CD8-positive, alpha-beta T cell (primary cell): ENCODE measurements at regions of chr20 and their contacts with region 1.

Region 1: DNA sequence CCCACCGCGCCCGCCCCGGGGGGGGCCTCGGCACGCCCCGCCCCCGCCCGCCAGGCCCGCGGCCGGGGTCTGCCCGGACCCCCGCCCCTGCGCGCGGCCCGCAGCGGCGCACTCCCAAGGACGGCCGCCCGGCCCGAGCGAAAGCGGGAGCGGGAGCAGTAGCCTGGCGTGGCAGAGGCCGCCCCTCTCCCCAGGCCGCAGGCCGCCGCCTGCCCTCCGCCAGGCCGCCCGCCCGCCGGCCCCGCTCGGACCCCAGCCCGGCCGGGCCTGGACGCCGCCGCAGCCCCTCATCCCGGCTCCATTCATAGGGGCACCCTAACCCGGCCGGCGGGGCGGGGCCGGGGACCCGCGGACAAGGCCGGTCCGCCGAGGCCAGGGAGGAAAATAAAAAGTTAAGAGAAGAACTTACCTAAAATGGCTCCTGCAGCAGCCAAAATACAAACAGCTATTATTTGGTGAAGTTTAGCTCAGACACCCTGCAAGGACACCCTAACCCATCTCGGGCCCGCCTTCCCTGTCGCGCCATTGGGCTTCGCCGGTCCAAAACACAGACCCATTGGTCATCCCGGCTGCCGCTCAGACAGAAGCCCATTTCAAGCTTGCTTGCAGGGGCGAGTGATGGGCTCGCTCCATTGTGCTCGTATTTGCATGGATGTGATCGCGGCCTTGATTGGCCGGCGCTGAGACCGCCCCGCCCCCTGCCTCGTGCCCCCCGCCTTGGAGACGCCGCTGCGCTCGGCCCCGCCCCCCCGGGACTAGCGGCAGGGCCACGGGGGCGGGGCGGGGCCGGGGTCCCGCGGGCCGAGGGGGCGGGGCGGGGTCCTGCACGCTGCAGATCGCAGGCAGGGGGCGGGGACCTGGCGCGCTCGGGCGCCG is at the start of gene CHD6:
- DNase-seq: peak; percentile 97 to 100 (median 99)
- ATAC-seq: peak; percentile 92
- H3K4me3 ChIP-seq: peak within 1 kb of the TSS; percentile 65 to 67
- H3K4me3 Mint-ChIP-seq: peak within 1 kb of the TSS; percentile 92
- H3K27ac ChIP-seq: peak within 1 kb of the TSS; percentile 60 to 68
- H3K27ac Mint-ChIP-seq: peak within 1 kb of the TSS; percentile 91
- H3K4me1 ChIP-seq: peaks cover 23% of the 10 kb centered on the region
- H3K4me1 Mint-ChIP-seq: peaks cover 47% of the 10 kb centered on the region
- H3K27me3 ChIP-seq: no peaks in the 10 kb centered on the region
- H3K27me3 Mint-ChIP-seq: no peaks in the 10 kb centered on the region
- CTCF ChIP-seq: no peak
- total RNA-seq, gene CHD6: 113 to 122 TPM

Region 2: DNA sequence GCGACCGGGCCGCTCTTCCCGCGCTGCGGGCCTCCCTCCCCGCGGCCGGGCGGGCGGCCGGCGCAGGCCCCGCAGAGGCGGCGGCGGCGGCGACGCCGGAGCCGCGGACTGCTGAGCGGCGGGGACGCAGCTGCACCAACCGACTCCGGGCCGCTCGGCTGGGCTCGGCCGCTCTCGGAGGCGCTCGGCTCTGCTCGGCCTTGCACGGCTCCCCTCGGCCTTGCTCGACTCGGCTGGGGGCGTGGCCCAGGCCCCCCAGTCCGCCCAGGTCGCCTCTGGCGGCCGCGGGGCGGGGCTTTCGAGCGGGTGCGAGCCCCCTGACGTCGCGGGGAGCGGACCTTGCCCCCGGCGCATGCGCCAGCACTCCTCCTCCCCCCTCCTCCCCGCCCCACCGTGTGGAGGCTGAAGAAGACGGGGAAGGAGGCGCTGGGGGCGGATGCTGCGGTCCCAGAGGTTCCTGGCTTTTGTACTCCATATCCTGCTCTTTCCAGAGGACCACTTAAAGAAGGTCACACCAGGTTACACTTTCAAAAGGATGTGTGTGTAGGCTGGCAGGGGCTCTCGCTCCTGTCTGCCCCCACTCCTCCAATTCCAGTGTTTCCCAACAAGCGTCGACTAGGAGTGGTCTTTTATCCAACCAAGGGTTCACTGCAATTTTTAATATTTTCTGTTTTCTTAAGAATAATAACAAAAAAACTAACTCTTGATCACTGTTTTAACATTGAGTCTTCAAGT is 300.5 kb before region 1 on chr20 and contains the start of gene ZHX3:
- CTCF ChIA-PET with region 1: no interaction called
- POLR2A ChIA-PET with region 1: no interaction called
- intact Hi-C with region 1: loop called (anchors 1 to 2 kb)
- DNase-seq: peak; percentile 93 to 99 (median 97)
- ATAC-seq: peak; percentile 95
- H3K4me3 ChIP-seq: peak within 1 kb of the TSS; percentile 67 to 85
- H3K4me3 Mint-ChIP-seq: peak within 1 kb of the TSS; percentile 80
- H3K27ac ChIP-seq: peak within 1 kb of the TSS; percentile 47 to 57
- H3K27ac Mint-ChIP-seq: peak within 1 kb of the TSS; percentile 57
- H3K4me1 ChIP-seq: peaks cover 11% of the 10 kb centered on the region
- H3K4me1 Mint-ChIP-seq: peaks cover 28% of the 10 kb centered on the region
- H3K27me3 ChIP-seq: no peaks in the 10 kb centered on the region
- H3K27me3 Mint-ChIP-seq: no peaks in the 10 kb centered on the region
- CTCF ChIP-seq: no peak
- total RNA-seq, gene ZHX3: 4.4 to 4.7 TPM

Region 3: DNA sequence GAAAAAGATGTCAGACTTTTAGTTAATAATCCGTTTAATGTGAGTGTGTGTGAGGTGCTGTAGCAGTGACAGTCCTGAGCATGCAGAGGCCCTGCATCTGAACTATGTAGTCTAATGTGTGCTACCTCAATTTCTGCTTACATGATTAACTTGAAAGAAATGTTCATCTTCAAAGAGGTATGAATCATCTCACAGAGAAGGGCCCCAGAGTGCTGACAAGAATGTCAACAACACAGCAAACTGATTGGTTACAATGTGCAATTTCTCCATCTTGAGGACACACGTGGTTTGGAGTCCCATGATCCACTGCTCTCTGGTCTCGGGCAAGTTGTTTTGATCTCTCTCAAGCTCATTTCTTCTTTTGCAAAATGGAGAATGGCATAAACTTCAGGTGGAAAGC is 189.9 kb before region 1 on chr20:
- CTCF ChIA-PET with region 1: no interaction called
- POLR2A ChIA-PET with region 1: no interaction called
- intact Hi-C with region 1: loop called in 1 of 2 experiments (anchors 1 kb)
- DNase-seq: peak in 7 of 9 experiments; percentile 6 to 72 (median 39)
- ATAC-seq: peak; percentile 94
- H3K4me3 ChIP-seq: no peak overlapping the region
- H3K4me3 Mint-ChIP-seq: peak overlapping the region; percentile 9
- H3K27ac ChIP-seq: peak overlapping the region in 1 of 2 experiments; percentile 12
- H3K27ac Mint-ChIP-seq: peak overlapping the region; percentile 86
- H3K4me1 ChIP-seq: peaks cover 27% of the 10 kb centered on the region
- H3K4me1 Mint-ChIP-seq: peaks cover 37% of the 10 kb centered on the region
- H3K27me3 ChIP-seq: no peaks in the 10 kb centered on the region
- H3K27me3 Mint-ChIP-seq: no peaks in the 10 kb centered on the region
- CTCF ChIP-seq: no peak

Region 4: GRCh38 chr20:41462372-41463161 is 155.6 kb before region 1 on chr20:
- CTCF ChIA-PET with region 1: no interaction called
- POLR2A ChIA-PET with region 1: no interaction called
- intact Hi-C with region 1: no loop called
- DNase-seq: no peak
- ATAC-seq: no peak
- H3K4me3 ChIP-seq: no peak overlapping the region
- H3K4me3 Mint-ChIP-seq: no peak overlapping the region
- H3K27ac ChIP-seq: no peak overlapping the region
- H3K27ac Mint-ChIP-seq: no peak overlapping the region
- H3K4me1 ChIP-seq: no peaks in the 10 kb centered on the region
- H3K4me1 Mint-ChIP-seq: no peaks in the 10 kb centered on the region
- H3K27me3 ChIP-seq: no peaks in the 10 kb centered on the region
- H3K27me3 Mint-ChIP-seq: no peaks in the 10 kb centered on the region
- CTCF ChIP-seq: no peak

Region 5: DNA sequence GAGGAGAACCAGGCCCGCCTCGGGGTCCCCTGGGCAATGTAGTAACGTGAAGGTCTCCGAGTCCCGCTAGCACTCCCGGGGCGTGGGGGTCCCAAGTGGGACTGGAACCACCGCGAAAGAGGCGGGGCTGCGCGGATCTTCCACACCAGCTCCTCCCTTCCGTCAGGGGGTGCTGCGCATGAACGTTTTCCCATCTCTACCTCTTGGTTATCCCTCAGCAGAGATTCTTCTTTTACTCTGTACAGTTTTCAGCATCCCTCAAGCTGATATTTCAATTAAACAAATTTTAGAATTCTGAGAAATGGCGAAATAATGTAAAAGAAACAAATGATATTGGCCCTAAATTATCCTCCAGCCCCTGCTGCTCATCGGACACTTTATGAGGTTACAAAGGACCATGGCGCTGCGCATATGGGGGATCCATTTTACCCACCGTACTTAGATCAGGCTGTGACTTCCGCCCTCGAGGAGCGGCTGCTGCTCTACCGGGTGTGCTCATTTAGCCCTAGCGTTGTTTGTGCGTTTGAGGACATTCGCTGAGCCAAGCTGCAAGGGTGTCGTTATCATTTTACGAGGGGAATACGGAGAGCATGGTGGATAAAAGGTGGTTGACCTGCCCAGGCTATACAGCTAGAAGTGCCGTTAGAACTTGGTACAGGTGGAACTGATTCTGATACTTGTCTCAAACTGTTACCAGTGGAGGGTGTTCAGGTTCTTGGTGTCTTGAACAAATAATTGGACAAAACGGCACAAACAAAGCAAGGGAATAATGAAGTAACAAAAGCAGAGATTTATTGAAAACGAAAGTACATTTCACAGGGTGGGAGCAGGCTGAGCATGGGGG is 75.2 kb after region 1 on chr20:
- CTCF ChIA-PET with region 1: interaction called, 3 read pairs
- POLR2A ChIA-PET with region 1: interaction called, 48 read pairs
- intact Hi-C with region 1: loop called (anchors 1 kb)
- DNase-seq: peak; percentile 60 to 94 (median 80)
- ATAC-seq: peak; percentile 86
- H3K4me3 ChIP-seq: peak overlapping the region; percentile 92 to 97
- H3K4me3 Mint-ChIP-seq: peak overlapping the region; percentile 87
- H3K27ac ChIP-seq: peak overlapping the region; percentile 86 to 91
- H3K27ac Mint-ChIP-seq: peak overlapping the region; percentile 93
- H3K4me1 ChIP-seq: peaks cover 10% of the 10 kb centered on the region
- H3K4me1 Mint-ChIP-seq: peaks cover 18% of the 10 kb centered on the region
- H3K27me3 ChIP-seq: no peaks in the 10 kb centered on the region
- H3K27me3 Mint-ChIP-seq: peaks cover 4% of the 10 kb centered on the region
- CTCF ChIP-seq: peak; percentile 40

Region 6: GRCh38 chr20:43456809-43457639 is 1838.9 kb after region 1 on chr20:
- CTCF ChIA-PET with region 1: no interaction called
- POLR2A ChIA-PET with region 1: no interaction called
- intact Hi-C with region 1: loop called in 1 of 2 experiments (anchors 5 kb)
- DNase-seq: peak; percentile 68 to 94 (median 87)
- ATAC-seq: peak; percentile 79
- H3K4me3 ChIP-seq: peak overlapping the region; percentile 97 to 100
- H3K4me3 Mint-ChIP-seq: peak overlapping the region; percentile 92
- H3K27ac ChIP-seq: peak overlapping the region; percentile 98 to 100
- H3K27ac Mint-ChIP-seq: peak overlapping the region; percentile 98
- H3K4me1 ChIP-seq: peaks cover 16% of the 10 kb centered on the region
- H3K4me1 Mint-ChIP-seq: peaks cover 36% of the 10 kb centered on the region
- H3K27me3 ChIP-seq: no peaks in the 10 kb centered on the region
- H3K27me3 Mint-ChIP-seq: peaks cover 8% of the 10 kb centered on the region
- CTCF ChIP-seq: no peak